ENCODE measurements at regions of chrX and their contacts with region 1.

Region 1: GRCh38 chrX:41333744-41334259 is at the start of gene DDX3X:
- DNase-seq: peak; percentile 76
- ATAC-seq: peak; percentile 59
- H3K4me3 Mint-ChIP-seq: peak within 1 kb of the TSS; percentile 93
- H3K27ac Mint-ChIP-seq: peak within 1 kb of the TSS; percentile 99
- H3K4me1 Mint-ChIP-seq: peaks cover 44% of the 10 kb centered on the region
- H3K27me3 Mint-ChIP-seq: no peaks in the 10 kb centered on the region
- CTCF ChIP-seq: no peak
- total RNA-seq, gene DDX3X: 225 and 247 TPM in 2 replicates

Region 2: GRCh38 chrX:39859991-39860861 is 1473.6 kb before region 1 on chrX:
- CTCF ChIA-PET with region 1: no interaction called
- POLR2A ChIA-PET with region 1: interaction called, 3 read pairs
- intact Hi-C with region 1: loop called (anchors 5 kb)
- DNase-seq: peak; percentile 37
- ATAC-seq: peak; percentile 53
- H3K4me3 Mint-ChIP-seq: no peak overlapping the region
- H3K27ac Mint-ChIP-seq: peak overlapping the region; percentile 50
- H3K4me1 Mint-ChIP-seq: peaks cover 33% of the 10 kb centered on the region
- H3K27me3 Mint-ChIP-seq: no peaks in the 10 kb centered on the region
- CTCF ChIP-seq: no peak

Region 3: DNA sequence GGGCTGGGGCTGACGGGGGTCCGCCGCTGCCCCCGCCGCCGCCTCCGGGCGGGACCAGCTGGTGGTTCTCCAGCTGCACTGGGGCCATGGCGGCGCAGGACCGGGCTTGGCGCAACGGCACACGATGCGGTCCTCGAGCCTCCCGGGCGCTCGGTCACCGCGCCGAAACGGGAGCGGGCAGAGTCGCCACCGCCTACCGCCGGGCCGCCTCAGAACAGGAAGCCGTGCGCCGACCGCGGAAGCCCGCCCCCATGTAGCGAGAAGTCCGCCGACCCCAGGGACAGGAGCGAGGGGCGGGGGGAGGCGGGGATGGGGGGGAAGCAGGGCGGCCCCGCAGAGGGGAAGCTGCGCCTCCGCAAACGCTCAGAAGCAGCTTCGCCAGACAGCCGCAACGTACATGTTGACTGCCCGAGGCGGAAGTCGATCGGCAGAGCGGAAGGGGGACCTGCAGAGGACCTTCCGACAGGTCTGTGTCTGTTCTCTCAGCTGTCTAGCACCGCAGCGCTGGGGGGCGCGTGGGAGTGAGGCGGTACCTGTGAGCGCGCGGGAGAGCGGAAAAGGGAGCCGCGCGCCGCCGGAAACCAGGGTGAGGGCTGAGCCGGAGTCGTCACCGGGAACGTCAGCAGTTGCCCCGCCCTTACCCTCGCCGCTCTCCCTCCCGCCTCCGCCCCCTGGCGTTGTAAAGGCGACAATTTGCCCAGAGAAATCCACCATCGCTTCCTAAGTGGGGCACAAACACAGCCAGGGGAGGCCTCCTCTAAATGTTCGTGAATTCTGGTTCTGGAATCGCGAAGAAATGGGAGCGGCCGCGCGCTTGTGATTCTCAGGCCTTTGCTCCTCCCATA is 598.3 kb before region 1 on chrX and contains the start of gene MED14:
- CTCF ChIA-PET with region 1: no interaction called
- POLR2A ChIA-PET with region 1: interaction called, 4 read pairs
- intact Hi-C with region 1: loop called (anchors 5 kb)
- DNase-seq: peak; percentile 77
- ATAC-seq: peak; percentile 80
- H3K4me3 Mint-ChIP-seq: peak within 1 kb of the TSS; percentile 89
- H3K27ac Mint-ChIP-seq: peak within 1 kb of the TSS; percentile 95
- H3K4me1 Mint-ChIP-seq: peaks cover 49% of the 10 kb centered on the region
- H3K27me3 Mint-ChIP-seq: no peaks in the 10 kb centered on the region
- CTCF ChIP-seq: no peak
- total RNA-seq, gene MED14: 52.4 and 62.6 TPM in 2 replicates

Region 4: DNA sequence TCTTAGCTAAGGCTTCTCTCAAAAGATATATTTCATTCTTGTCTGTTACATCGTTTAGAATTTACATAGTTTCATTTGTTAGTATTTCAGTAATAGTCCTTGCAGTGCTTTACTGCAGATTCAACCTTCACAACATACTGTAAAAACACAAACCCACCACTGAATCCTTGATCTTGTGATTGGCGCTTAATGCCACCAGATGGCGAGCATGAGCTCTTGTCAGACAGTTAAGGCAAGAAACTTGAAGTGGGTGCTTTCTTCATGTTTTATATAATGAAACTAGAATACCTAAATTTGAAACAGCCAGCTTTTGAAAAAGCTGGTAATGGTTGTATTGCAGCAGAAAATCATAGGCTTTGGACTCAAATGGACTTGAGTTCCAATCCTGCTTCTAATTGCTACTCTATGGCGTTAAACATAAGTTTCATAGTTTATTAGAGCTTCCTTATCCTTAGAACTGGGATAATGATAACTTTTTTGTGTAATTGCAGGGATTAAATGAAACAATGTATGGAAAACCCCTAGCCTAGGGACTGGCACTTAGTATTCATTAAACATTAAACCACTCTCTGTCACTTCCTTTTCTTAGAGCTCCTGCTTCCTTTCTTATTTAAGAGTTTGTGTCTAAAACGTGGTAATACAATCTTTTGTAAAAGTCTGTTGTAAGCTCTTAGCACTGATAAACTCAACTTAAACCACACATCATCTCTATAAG is 153.5 kb before region 1 on chrX:
- CTCF ChIA-PET with region 1: interaction called, 3 read pairs
- POLR2A ChIA-PET with region 1: no interaction called
- intact Hi-C with region 1: loop called (anchors 1 kb)
- DNase-seq: no peak
- ATAC-seq: peak; percentile 79
- H3K4me3 Mint-ChIP-seq: peak overlapping the region; percentile 58
- H3K27ac Mint-ChIP-seq: peak overlapping the region; percentile 83
- H3K4me1 Mint-ChIP-seq: peaks cover 52% of the 10 kb centered on the region
- H3K27me3 Mint-ChIP-seq: no peaks in the 10 kb centered on the region
- CTCF ChIP-seq: no peak

Region 5: DNA sequence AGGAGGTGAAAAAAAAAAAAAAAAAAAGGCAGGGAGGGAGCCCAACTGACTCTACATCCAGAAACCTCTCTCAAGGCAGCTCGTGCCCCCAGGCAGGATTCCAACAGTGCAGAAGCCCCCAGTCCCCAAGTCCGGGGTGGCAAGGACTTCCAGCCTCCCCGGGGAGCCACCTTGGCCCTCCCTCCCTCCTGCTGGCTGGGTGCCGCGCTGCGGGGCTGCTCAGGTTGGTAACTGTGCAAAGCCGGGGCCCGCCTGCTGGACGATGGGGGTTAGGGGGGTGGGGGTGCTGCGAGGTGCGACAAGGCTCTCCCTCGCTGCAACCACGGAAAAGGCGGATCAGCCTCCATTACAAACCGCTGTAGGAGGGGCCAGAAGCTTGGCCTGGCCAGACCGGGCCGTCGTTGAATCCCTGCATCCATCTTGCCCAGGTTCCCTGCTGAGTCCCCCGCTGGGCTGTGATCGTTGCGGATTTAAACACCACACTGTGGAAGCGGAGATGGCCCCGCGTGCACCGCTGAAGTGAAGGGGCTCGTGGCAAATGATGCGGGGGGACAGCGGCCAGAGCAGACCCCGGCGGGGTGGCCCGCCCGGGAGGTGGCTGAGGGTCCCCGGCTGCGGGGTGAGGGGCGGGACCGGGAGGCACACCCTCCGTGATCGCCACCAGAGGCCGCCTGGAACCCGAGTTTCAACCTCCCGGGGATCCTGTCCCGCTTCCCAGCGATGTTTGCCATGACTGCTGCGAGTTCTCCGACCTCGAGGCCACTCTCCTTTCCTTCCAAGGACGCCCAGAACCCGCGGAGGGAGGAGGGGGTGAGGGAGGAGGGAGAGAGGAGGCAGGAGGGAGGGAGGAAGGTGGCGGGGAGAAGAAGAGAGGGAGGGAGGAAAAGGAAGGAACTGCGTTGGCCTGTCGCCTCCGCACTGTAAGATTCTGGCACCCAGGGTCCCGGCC is 57.9 kb before region 1 on chrX:
- CTCF ChIA-PET with region 1: interaction called, 3 read pairs
- POLR2A ChIA-PET with region 1: interaction called, 10 read pairs
- intact Hi-C with region 1: loop called (anchors 5 kb)
- DNase-seq: peak; percentile 39
- ATAC-seq: peak; percentile 68
- H3K4me3 Mint-ChIP-seq: peak overlapping the region; percentile 83
- H3K27ac Mint-ChIP-seq: no peak overlapping the region
- H3K4me1 Mint-ChIP-seq: peaks cover 8% of the 10 kb centered on the region
- H3K27me3 Mint-ChIP-seq: no peaks in the 10 kb centered on the region
- CTCF ChIP-seq: no peak

Region 6: DNA sequence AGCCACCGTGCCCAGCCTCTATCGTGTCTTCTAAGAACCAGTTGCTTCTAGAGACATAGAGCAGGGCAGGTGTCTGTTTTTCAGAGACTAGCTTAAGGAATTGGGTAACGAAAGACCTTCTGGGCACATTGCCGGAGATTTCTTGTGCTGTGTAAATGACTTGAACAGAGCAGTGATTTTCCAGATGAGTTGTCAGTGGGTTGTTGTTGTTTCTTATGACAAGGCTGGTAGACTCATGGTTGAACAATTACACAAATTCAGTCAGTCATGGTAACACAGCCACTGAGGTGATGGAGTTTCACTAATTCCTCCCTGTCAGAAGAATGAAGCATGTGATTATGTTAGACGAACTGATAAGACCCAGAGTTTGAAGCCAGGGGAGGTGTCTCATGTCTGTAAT is 20.4 kb before region 1 on chrX:
- CTCF ChIA-PET with region 1: no interaction called
- POLR2A ChIA-PET with region 1: no interaction called
- intact Hi-C with region 1: no loop called
- DNase-seq: no peak
- ATAC-seq: no peak
- H3K4me3 Mint-ChIP-seq: no peak overlapping the region
- H3K27ac Mint-ChIP-seq: no peak overlapping the region
- H3K4me1 Mint-ChIP-seq: no peaks in the 10 kb centered on the region
- H3K27me3 Mint-ChIP-seq: no peaks in the 10 kb centered on the region
- CTCF ChIP-seq: no peak

Region 7: GRCh38 chrX:41441934-41442823 is 108.4 kb after region 1 on chrX:
- CTCF ChIA-PET with region 1: no interaction called
- POLR2A ChIA-PET with region 1: interaction called, 4 read pairs
- intact Hi-C with region 1: loop called (anchors 1 kb)
- DNase-seq: peak; percentile 87
- ATAC-seq: peak; percentile 92
- H3K4me3 Mint-ChIP-seq: peak overlapping the region; percentile 73
- H3K27ac Mint-ChIP-seq: peak overlapping the region; percentile 53
- H3K4me1 Mint-ChIP-seq: peaks cover 25% of the 10 kb centered on the region
- H3K27me3 Mint-ChIP-seq: no peaks in the 10 kb centered on the region
- CTCF ChIP-seq: no peak

Region 8: DNA sequence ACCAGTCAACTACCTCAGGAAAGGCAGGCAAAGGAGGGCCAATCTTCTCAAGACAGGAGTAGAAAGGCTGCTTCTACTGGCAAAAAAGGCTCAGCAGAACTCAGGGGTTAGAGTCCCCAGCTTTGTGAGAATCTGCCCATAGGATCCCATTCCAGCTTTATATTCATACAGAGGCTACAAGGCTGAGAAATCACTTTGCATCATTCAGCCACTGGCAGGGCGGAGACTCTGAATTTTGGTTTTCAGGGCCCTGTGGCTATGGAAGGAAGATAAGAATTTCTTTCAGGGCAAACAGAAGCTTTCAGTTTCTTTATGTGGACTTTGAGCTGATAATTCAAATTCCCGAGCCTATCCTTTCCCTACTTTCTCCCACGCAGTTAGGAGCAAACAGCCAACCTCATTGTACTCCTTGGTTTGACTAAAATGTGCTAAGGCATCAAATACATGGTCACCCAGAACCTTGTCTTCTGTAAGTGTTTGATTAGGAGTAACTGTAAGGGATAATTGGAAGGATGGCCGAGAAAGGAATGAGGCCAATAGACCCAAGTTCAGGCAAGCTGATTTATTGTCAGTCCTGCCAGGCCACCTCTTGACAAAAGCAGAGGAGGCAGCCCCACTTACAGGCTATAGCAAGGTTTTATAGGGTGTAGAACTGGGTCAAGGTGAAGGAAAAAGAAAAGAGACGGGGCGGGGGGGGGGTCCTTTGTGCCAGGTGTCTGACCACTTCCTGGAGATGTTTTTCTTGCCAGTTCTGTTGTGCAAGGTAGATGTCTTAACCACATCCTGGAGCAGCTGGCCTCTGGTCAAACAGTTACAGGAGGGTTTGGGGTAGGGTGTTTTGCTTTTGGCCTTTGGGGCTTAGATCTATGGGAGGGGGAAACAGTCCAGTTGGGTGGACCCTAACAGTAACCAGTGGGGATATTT is 1609.5 kb after region 1 on chrX:
- CTCF ChIA-PET with region 1: no interaction called
- POLR2A ChIA-PET with region 1: no interaction called
- intact Hi-C with region 1: loop called (anchors 5 kb)
- DNase-seq: no peak
- ATAC-seq: peak; percentile 66
- H3K4me3 Mint-ChIP-seq: peak overlapping the region; percentile 50
- H3K27ac Mint-ChIP-seq: peak overlapping the region; percentile 93
- H3K4me1 Mint-ChIP-seq: peaks cover 78% of the 10 kb centered on the region
- H3K27me3 Mint-ChIP-seq: no peaks in the 10 kb centered on the region
- CTCF ChIP-seq: no peak

Measured in activated B cell treated with CpG ODN at 0.5 μM for 24 hours (primary cell).